ENCODE measurements at regions of chr15 and their contacts with region 1.

Region 1: DNA sequence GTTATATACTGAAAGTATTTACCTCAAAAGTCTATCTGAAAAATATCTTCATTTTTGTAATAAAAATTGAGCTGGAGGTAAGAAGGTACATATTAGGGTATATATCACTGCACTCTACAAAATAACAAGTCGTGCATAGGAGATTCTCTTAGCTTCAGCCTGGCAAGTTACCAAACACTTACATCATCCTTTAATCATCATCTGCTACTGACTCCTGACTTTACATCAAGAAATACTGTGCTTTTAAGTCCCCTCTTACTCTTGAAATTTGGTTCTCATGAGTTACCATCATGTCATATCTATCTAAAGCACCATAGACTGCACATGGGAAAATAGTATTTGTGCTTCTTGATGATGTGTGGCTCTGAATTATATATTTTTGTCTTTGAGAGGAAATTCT is 50.8 kb downstream of the LYSMD4 start:
- DNase-seq: peak in 2 of 14 experiments; percentile 16 to 37
- ATAC-seq: peak; percentile 48
- H3K4me3 ChIP-seq: no peak overlapping the region
- H3K4me3 Mint-ChIP-seq: no peak overlapping the region
- H3K27ac ChIP-seq: peak overlapping the region in 1 of 2 donors; percentile 13
- H3K27ac Mint-ChIP-seq: peak overlapping the region; percentile 72
- H3K4me1 ChIP-seq: peaks cover 5% of the 10 kb centered on the region
- H3K4me1 Mint-ChIP-seq: peaks cover 55% of the 10 kb centered on the region
- H3K27me3 ChIP-seq: no peaks in the 10 kb centered on the region
- H3K27me3 Mint-ChIP-seq: no peaks in the 10 kb centered on the region
- CTCF ChIP-seq: no peak

Region 2: DNA sequence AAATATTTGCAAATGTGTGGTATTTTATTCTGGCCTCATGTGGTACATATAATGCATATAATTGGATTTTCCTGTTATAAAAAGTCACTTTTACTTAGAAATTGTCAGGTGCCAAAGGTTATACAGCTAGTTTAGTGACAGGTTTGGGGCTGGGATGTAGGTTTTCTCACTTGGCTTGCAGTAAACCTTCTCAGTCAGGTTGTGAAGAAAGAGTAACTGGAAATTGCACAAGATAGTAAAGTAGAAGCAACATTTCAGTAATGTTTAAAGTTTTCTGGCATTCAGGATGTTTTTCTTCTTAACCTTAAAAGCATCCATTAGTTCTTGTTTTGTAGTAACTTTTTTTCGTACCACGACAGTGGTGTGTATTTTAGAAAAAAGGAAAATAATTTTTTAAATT is 62.7 kb before region 1 on chr15:
- CTCF ChIA-PET with region 1: no interaction called
- POLR2A ChIA-PET with region 1: no interaction called
- intact Hi-C with region 1: loop called in 1 of 2 experiments (anchors 10 kb)
- DNase-seq: no peak
- ATAC-seq: no peak
- H3K4me3 ChIP-seq: no peak overlapping the region
- H3K4me3 Mint-ChIP-seq: no peak overlapping the region
- H3K27ac ChIP-seq: no peak overlapping the region
- H3K27ac Mint-ChIP-seq: peak overlapping the region; percentile 34
- H3K4me1 ChIP-seq: peaks cover 8% of the 10 kb centered on the region
- H3K4me1 Mint-ChIP-seq: peaks cover 48% of the 10 kb centered on the region
- H3K27me3 ChIP-seq: no peaks in the 10 kb centered on the region
- H3K27me3 Mint-ChIP-seq: no peaks in the 10 kb centered on the region
- CTCF ChIP-seq: no peak

Region 3: GRCh38 chr15:99635807-99636206 is 46.6 kb before region 1 on chr15:
- CTCF ChIA-PET with region 1: no interaction called
- POLR2A ChIA-PET with region 1: no interaction called
- intact Hi-C with region 1: no loop called
- DNase-seq: no peak
- ATAC-seq: no peak
- H3K4me3 ChIP-seq: no peak overlapping the region
- H3K4me3 Mint-ChIP-seq: no peak overlapping the region
- H3K27ac ChIP-seq: no peak overlapping the region
- H3K27ac Mint-ChIP-seq: no peak overlapping the region
- H3K4me1 ChIP-seq: no peaks in the 10 kb centered on the region
- H3K4me1 Mint-ChIP-seq: peaks cover 41% of the 10 kb centered on the region
- H3K27me3 ChIP-seq: no peaks in the 10 kb centered on the region
- H3K27me3 Mint-ChIP-seq: no peaks in the 10 kb centered on the region
- CTCF ChIP-seq: no peak